B cell (primary cell): ENCODE measurements at regions of chr4 and their contacts with region 1.

Region 1: GRCh38 chr4:8241895-8242696 is 27.5 kb upstream of the HTRA3 start:
- DNase-seq: peak; percentile 79
- ATAC-seq: peak; percentile 62
- H3K4me3 ChIP-seq: no peak overlapping the region
- H3K4me3 Mint-ChIP-seq: no peak overlapping the region
- H3K27ac ChIP-seq: no peak overlapping the region
- H3K27ac Mint-ChIP-seq: no peak overlapping the region
- H3K4me1 ChIP-seq: peaks cover 0 to 27% of the 10 kb centered on the region in 2 donors
- H3K4me1 Mint-ChIP-seq: peaks cover 24% of the 10 kb centered on the region
- H3K27me3 ChIP-seq: no peaks in the 10 kb centered on the region
- H3K27me3 Mint-ChIP-seq: no peaks in the 10 kb centered on the region
- CTCF ChIP-seq: peak; percentile 95

Region 2: DNA sequence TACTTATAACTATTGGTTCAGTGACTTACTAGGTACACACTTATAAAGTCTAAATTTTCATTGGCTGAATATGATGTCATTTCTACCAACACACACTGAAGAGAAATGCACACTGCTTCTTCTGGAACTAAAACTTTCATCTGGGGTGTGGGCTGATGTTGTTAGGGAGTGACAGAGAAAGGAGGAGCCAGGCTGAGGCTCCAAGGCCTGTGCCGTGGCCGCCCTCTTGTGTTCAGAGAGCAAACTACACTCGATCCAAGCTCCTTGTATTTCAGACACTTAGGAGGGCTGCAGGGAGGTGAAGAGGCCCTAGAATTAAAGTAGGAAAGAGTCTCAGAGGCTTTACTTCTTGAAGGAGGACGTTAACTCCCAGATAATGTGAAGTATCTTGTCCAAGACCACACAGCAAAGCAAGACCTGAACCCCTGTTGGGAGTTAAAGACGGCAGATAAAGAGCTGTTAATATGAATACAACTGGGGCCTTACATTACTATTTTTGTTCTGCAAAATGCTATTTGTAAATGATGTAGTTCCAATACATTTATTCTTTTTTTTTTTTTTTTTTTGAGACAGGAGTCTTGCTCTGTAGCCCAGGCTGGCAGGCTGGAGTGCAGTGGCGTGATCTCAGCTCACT is 439.9 kb before region 1 on chr4:
- CTCF ChIA-PET with region 1: interaction called, 15 read pairs
- POLR2A ChIA-PET with region 1: no interaction called
- intact Hi-C with region 1: no loop called
- DNase-seq: peak; percentile 69
- ATAC-seq: peak; percentile 87
- H3K4me3 ChIP-seq: no peak overlapping the region
- H3K4me3 Mint-ChIP-seq: no peak overlapping the region
- H3K27ac ChIP-seq: no peak overlapping the region
- H3K27ac Mint-ChIP-seq: no peak overlapping the region
- H3K4me1 ChIP-seq: no peaks in the 10 kb centered on the region
- H3K4me1 Mint-ChIP-seq: no peaks in the 10 kb centered on the region
- H3K27me3 ChIP-seq: peaks cover 0 to 5% (median 0%) of the 10 kb centered on the region in 4 experiments
- H3K27me3 Mint-ChIP-seq: peaks cover 20% of the 10 kb centered on the region
- CTCF ChIP-seq: peak; percentile 81

Region 3: DNA sequence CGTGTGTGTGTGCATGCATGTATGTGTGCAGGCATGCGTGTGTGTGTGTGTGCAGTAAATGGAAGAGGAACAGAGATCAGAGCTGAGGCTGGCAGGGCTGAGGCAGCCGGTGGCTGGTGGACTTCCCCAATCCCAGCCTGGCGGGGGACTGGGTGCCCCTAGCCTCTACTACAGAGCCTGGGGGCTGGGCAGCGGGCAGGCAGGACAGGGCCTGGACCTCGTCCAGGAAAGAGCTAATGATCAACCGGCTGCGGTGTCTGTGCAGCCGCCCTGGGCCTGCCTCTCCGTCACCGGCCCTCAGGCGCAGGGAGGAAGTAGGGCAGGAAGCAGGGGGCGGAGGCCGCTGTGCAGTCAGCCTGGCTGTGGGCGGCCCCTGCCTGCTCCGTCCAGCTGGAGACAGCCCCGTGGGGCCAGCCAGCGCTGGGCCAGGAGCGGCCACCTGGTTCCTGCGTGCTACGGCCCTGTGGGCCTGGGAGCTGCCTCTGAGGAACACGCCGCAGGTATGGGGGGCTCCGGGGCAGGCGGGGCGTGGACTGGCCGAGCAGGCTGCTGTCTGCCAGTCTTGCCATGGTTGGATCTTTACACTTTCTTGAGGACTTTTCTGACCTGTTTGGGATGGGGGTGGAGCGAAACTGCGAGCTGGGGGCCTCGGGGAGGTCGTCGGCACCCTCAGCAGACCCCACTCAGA is 43.0 kb before region 1 on chr4 and contains the start of gene SH3TC1:
- CTCF ChIA-PET with region 1: interaction called, 6 read pairs
- POLR2A ChIA-PET with region 1: interaction called, 6 read pairs
- intact Hi-C with region 1: loop called (anchors 2 kb)
- DNase-seq: peak; percentile 87
- ATAC-seq: peak; percentile 63
- H3K4me3 ChIP-seq: peak within 1 kb of the TSS; percentile 39 to 96 (median 85)
- H3K4me3 Mint-ChIP-seq: peak within 1 kb of the TSS; percentile 100
- H3K27ac ChIP-seq: peak within 1 kb of the TSS; percentile 80 to 91
- H3K27ac Mint-ChIP-seq: peak within 1 kb of the TSS; percentile 100
- H3K4me1 ChIP-seq: peaks cover 41 to 56% of the 10 kb centered on the region in 2 donors
- H3K4me1 Mint-ChIP-seq: peaks cover 60% of the 10 kb centered on the region
- H3K27me3 ChIP-seq: no peaks in the 10 kb centered on the region
- H3K27me3 Mint-ChIP-seq: no peaks in the 10 kb centered on the region
- CTCF ChIP-seq: no peak
- total RNA-seq, gene SH3TC1: 388 and 396 TPM in 2 replicates

Region 4: GRCh38 chr4:8228319-8229250 is 13.5 kb before region 1 on chr4:
- CTCF ChIA-PET with region 1: interaction called, 35 read pairs
- POLR2A ChIA-PET with region 1: interaction called, 9 read pairs
- intact Hi-C with region 1: loop called (anchors 1 kb)
- DNase-seq: peak; percentile 75
- ATAC-seq: peak; percentile 73
- H3K4me3 ChIP-seq: peak overlapping the region in 1 of 5 experiments; percentile 14
- H3K4me3 Mint-ChIP-seq: peak overlapping the region; percentile 74
- H3K27ac ChIP-seq: peak overlapping the region; percentile 68 to 73
- H3K27ac Mint-ChIP-seq: peak overlapping the region; percentile 92
- H3K4me1 ChIP-seq: peaks cover 17 to 41% of the 10 kb centered on the region in 2 donors
- H3K4me1 Mint-ChIP-seq: peaks cover 39% of the 10 kb centered on the region
- H3K27me3 ChIP-seq: no peaks in the 10 kb centered on the region
- H3K27me3 Mint-ChIP-seq: no peaks in the 10 kb centered on the region
- CTCF ChIP-seq: no peak

Region 5: GRCh38 chr4:8252301-8253173 is 10.4 kb after region 1 on chr4:
- CTCF ChIA-PET with region 1: interaction called, 12 read pairs
- POLR2A ChIA-PET with region 1: no interaction called
- intact Hi-C with region 1: no loop called
- DNase-seq: no peak
- ATAC-seq: no peak
- H3K4me3 ChIP-seq: no peak overlapping the region
- H3K4me3 Mint-ChIP-seq: no peak overlapping the region
- H3K27ac ChIP-seq: no peak overlapping the region
- H3K27ac Mint-ChIP-seq: no peak overlapping the region
- H3K4me1 ChIP-seq: no peaks in the 10 kb centered on the region
- H3K4me1 Mint-ChIP-seq: no peaks in the 10 kb centered on the region
- H3K27me3 ChIP-seq: no peaks in the 10 kb centered on the region
- H3K27me3 Mint-ChIP-seq: no peaks in the 10 kb centered on the region
- CTCF ChIP-seq: no peak

Region 6: GRCh38 chr4:8403173-8403753 is 161.2 kb after region 1 on chr4:
- CTCF ChIA-PET with region 1: interaction called, 13 read pairs
- POLR2A ChIA-PET with region 1: no interaction called
- intact Hi-C with region 1: loop called (anchors 1 kb)
- DNase-seq: peak; percentile 56
- ATAC-seq: peak; percentile 53
- H3K4me3 ChIP-seq: no peak overlapping the region
- H3K4me3 Mint-ChIP-seq: no peak overlapping the region
- H3K27ac ChIP-seq: no peak overlapping the region
- H3K27ac Mint-ChIP-seq: no peak overlapping the region
- H3K4me1 ChIP-seq: no peaks in the 10 kb centered on the region
- H3K4me1 Mint-ChIP-seq: peaks cover 2% of the 10 kb centered on the region
- H3K27me3 ChIP-seq: no peaks in the 10 kb centered on the region
- H3K27me3 Mint-ChIP-seq: no peaks in the 10 kb centered on the region
- CTCF ChIP-seq: peak; percentile 89